ENCODE measurements at regions of chr1 and their contacts with region 1.

Region 1: DNA sequence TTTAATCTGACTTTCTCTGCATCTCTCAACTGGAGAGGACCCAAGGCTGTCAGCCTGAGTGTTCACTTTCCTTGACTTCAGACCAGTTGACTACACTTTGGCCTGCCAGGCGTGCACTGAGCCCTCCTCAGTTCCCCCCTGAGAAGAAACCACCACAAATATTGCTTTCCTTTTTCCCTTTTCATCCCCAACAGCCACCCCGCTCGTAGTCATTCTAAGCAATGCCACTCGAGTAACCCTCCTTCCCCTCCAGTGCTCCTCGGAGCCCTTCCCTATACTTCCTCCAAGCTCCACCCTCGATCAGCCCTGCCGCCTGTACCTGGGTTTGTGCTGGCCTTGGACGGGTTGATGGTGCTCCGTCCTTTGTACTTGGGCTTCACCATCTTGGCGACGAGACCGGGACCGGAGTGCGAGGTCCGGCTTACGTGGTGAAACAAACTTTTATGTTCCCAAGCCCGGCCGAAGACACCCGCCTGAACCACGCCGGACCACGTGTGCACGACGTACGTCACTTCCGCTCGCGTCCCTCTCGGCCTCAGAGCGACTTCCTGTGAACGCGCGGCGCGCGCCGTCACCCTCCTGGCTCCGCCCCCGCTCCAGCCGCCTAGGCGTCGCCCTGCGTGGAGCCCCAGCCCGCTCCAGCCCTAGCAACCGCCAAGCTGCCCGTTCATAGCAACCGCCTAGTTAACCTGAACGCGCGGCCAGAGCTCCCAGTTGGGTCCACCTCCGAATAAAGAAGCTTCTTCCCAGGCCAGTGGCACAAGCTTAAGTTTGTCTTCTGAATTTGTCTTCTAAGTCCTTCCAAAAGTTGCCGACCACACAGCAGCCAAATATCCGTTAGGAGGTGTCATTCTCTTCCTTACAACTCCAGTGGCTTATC is at the start of gene GNL2:
- DNase-seq: peak; percentile 97
- H3K4me3 ChIP-seq: peak within 1 kb of the TSS; percentile 84
- H3K27ac ChIP-seq: peak within 1 kb of the TSS; percentile 83
- H3K4me1 ChIP-seq: peaks cover 8% of the 10 kb centered on the region
- H3K27me3 ChIP-seq: peaks cover under 1% of the 10 kb centered on the region
- CTCF ChIP-seq: no peak
- total RNA-seq, gene GNL2: 101 and 121 TPM in 2 replicates

Region 2: GRCh38 chr1:36561335-36561724 is 1034.3 kb before region 1 on chr1:
- CTCF ChIA-PET with region 1: no interaction called
- POLR2A ChIA-PET with region 1: interaction called, 13 read pairs
- intact Hi-C with region 1: no loop called
- DNase-seq: no peak
- H3K4me3 ChIP-seq: no peak overlapping the region
- H3K27ac ChIP-seq: no peak overlapping the region
- H3K4me1 ChIP-seq: no peaks in the 10 kb centered on the region
- H3K27me3 ChIP-seq: no peaks in the 10 kb centered on the region
- CTCF ChIP-seq: no peak

Region 3: DNA sequence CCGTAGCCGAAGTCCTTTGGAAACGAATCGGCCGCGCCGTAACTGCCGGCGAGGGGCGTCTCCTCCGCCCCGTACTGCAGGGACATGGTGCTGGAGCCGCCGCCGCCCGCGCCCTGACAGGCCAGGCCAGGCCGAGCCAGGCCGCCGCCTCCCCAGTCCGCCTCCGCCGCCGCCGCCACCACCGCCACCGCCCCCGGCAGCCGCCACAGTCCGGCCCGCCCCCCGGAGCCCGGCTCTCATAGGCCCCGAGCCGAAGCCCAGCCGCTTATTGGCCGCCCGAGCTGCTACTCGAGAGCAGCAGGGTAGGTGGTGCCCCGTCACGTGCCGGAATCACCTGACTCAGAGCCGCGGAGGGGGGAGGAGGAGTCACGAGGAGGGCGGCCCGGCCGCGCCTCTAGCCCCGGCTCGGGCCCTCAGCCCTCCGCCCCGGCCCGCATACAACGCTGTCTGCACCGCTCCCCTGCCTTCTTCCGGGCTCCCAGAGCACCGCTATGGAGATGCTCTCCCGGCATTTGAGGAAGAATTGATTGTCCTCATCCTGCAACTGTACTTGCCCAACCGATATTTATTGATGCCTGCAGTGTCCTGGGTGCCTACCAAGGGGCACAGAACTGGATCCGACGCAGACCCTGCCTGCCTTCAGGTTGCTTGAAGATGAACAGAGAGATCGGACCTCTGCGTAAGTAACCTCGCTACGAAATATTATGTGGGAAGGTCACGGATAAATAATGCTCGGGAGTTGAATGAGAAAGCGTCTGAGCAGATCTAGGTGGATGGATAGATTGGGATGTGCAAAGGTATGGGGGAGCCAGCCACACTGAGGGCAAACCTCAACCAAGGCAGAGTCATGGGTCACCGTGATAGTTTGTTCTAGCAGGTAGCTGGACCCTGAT is 1264.1 kb after region 1 on chr1 and contains the start of gene RRAGC:
- CTCF ChIA-PET with region 1: no interaction called
- POLR2A ChIA-PET with region 1: interaction called, 15 read pairs
- intact Hi-C with region 1: no loop called
- DNase-seq: peak; percentile 99
- H3K4me3 ChIP-seq: peak within 1 kb of the TSS; percentile 75
- H3K27ac ChIP-seq: peak within 1 kb of the TSS; percentile 65
- H3K4me1 ChIP-seq: peaks cover 14% of the 10 kb centered on the region
- H3K27me3 ChIP-seq: no peaks in the 10 kb centered on the region
- CTCF ChIP-seq: no peak
- total RNA-seq, gene RRAGC: 19.9 and 26.0 TPM in 2 replicates